Naive thymus-derived CD4-positive, alpha-beta T cell (primary cell): ENCODE measurements at regions of chr11 and their contacts with region 1.

Region 1: DNA sequence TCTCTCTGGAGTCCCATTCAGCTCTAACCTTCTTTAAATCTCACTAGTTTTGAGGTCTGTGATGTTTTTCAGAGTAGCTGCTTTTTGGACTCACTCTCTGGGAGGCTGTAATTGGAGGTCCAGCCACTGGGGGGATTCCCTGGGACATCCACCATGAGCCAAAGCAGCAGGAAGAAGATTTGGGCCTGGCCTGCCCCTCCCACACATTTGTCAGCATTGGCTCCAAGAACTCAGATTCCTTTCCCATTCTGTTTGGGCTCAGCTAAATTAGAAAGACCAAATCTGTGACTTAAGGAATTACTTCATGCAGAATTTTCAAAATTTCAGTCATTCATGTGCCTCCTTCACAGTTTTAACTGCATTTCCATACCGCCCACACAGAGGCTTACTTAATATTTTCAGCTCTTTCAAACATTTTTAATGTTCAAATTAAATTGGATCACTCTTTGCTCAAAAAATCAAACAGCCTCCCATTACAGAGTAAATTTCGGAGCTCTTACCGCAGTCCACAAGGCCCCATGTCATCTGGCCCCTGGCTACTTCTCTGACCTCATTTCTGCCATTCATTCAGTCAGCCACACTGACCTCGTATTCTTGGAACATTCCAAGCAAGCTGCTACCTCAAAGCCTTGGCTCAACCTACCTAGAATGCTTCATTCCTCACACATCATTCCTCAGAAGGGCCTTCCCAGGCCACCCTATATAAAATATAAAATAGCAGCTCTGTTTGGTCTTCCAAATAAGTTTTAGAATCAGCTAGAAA is 54.5 kb upstream of the RRAS2 start:
- DNase-seq: no peak
- ATAC-seq: no peak
- H3K4me3 ChIP-seq: no peak overlapping the region
- H3K4me3 Mint-ChIP-seq: no peak overlapping the region
- H3K27ac ChIP-seq: no peak overlapping the region
- H3K27ac Mint-ChIP-seq: peak overlapping the region in 2 of 9 donors; percentile 39 to 87
- H3K4me1 ChIP-seq: peaks cover 12 to 30% of the 10 kb centered on the region in 2 donors
- H3K4me1 Mint-ChIP-seq: peaks cover 12 to 69% (median 25%) of the 10 kb centered on the region in 7 donors
- H3K27me3 ChIP-seq: no peaks in the 10 kb centered on the region
- H3K27me3 Mint-ChIP-seq: no peaks in the 10 kb centered on the region

Region 2: DNA sequence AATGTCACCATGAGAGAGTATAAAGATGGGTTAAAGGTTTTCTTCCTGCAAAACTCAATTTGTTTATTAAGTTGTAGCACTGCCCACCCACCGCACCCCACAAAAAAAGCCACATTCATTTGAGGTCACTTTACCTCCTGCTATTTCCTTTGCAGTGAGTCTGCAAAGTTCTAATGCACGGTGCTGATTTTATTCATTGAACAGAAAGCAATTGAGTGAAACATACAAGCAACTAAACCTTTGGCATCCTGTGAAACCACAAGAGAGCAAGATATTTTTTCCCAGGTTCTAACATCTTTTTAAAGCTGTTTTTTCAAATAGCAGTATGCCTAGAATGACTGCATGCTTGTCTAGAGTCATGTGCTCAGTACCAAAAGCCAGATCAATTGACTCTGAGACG is 93.5 kb before region 1 on chr11:
- CTCF ChIA-PET with region 1: no interaction called
- POLR2A ChIA-PET with region 1: no interaction called
- intact Hi-C with region 1: loop called in 1 of 2 experiments (anchors 5 kb)
- DNase-seq: peak in 7 of 9 donors; percentile 24 to 65 (median 47)
- ATAC-seq: peak; percentile 82
- H3K4me3 ChIP-seq: peak overlapping the region; percentile 15
- H3K4me3 Mint-ChIP-seq: peak overlapping the region in 9 of 10 donors; percentile 2 to 67 (median 42)
- H3K27ac ChIP-seq: no peak overlapping the region
- H3K27ac Mint-ChIP-seq: peak overlapping the region in 4 of 9 donors; percentile 28 to 50 (median 48)
- H3K4me1 ChIP-seq: peaks cover 14 to 38% of the 10 kb centered on the region in 2 donors
- H3K4me1 Mint-ChIP-seq: peaks cover 8 to 72% (median 34%) of the 10 kb centered on the region in 7 donors
- H3K27me3 ChIP-seq: no peaks in the 10 kb centered on the region
- H3K27me3 Mint-ChIP-seq: no peaks in the 10 kb centered on the region

Region 3: GRCh38 chr11:14374922-14375830 is 38.3 kb before region 1 on chr11:
- CTCF ChIA-PET with region 1: no interaction called
- POLR2A ChIA-PET with region 1: no interaction called
- intact Hi-C with region 1: loop called (anchors 2 to 5 kb)
- DNase-seq: no peak
- ATAC-seq: no peak
- H3K4me3 ChIP-seq: no peak overlapping the region
- H3K4me3 Mint-ChIP-seq: peak overlapping the region in 1 of 10 donors; percentile 4
- H3K27ac ChIP-seq: no peak overlapping the region
- H3K27ac Mint-ChIP-seq: peak overlapping the region in 1 of 9 donors; percentile 71
- H3K4me1 ChIP-seq: no peaks in the 10 kb centered on the region
- H3K4me1 Mint-ChIP-seq: peaks cover 0 to 41% (median 0%) of the 10 kb centered on the region in 7 donors
- H3K27me3 ChIP-seq: no peaks in the 10 kb centered on the region
- H3K27me3 Mint-ChIP-seq: peaks cover 15 to 23% (median 22%) of the 10 kb centered on the region in 5 donors

Region 4: GRCh38 chr11:14380947-14381561 is 32.4 kb before region 1 on chr11:
- CTCF ChIA-PET with region 1: no interaction called
- POLR2A ChIA-PET with region 1: no interaction called
- intact Hi-C with region 1: loop called (anchors 2 to 5 kb)
- DNase-seq: peak in 8 of 9 donors; percentile 16 to 50 (median 32)
- ATAC-seq: peak; percentile 91
- H3K4me3 ChIP-seq: peak overlapping the region; percentile 54
- H3K4me3 Mint-ChIP-seq: peak overlapping the region; percentile 59 to 84 (median 76)
- H3K27ac ChIP-seq: no peak overlapping the region
- H3K27ac Mint-ChIP-seq: no peak overlapping the region
- H3K4me1 ChIP-seq: no peaks in the 10 kb centered on the region
- H3K4me1 Mint-ChIP-seq: peaks cover 0 to 17% (median 0%) of the 10 kb centered on the region in 7 donors
- H3K27me3 ChIP-seq: peaks cover 0 to 8% of the 10 kb centered on the region in 2 donors
- H3K27me3 Mint-ChIP-seq: peaks cover 27 to 40% (median 33%) of the 10 kb centered on the region in 5 donors

Region 5: DNA sequence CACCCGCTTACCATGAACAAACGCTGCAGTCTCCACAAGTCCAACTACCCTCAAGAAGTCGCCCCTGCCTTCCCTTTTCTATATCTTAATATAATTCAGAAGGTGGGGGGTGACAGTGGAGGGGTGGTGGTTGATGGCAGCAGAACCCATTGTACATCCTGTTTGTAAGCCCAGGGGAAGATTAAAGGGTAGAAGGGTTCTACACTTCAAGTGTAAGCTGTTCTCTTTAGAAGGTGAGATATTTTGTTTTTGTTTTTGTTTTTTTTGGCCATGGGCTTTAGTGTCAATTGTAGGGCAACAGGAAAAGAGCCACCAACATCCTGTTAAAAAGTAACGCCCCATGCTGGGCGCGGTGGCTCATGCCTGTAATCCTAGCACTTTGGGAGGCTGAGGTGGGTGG is 19.6 kb before region 1 on chr11:
- CTCF ChIA-PET with region 1: no interaction called
- POLR2A ChIA-PET with region 1: no interaction called
- intact Hi-C with region 1: no loop called
- DNase-seq: no peak
- ATAC-seq: peak; percentile 29
- H3K4me3 ChIP-seq: no peak overlapping the region
- H3K4me3 Mint-ChIP-seq: peak overlapping the region in 1 of 10 donors; percentile 30
- H3K27ac ChIP-seq: no peak overlapping the region
- H3K27ac Mint-ChIP-seq: no peak overlapping the region
- H3K4me1 ChIP-seq: no peaks in the 10 kb centered on the region
- H3K4me1 Mint-ChIP-seq: peaks cover 0 to 9% (median 0%) of the 10 kb centered on the region in 7 donors
- H3K27me3 ChIP-seq: no peaks in the 10 kb centered on the region
- H3K27me3 Mint-ChIP-seq: peaks cover 0 to 26% (median 0%) of the 10 kb centered on the region in 5 donors